ENCODE measurements at regions of chr17 and their contacts with region 1.

Region 1: GRCh38 chr17:40909351-40909750 is 24.3 kb upstream of the KRT20 start:
- DNase-seq: no peak
- H3K4me3 ChIP-seq: no peak overlapping the region
- H3K27ac ChIP-seq: peak overlapping the region; percentile 55 to 75 (median 62)
- H3K4me1 ChIP-seq: peaks cover 0 to 25% (median 21%) of the 10 kb centered on the region in 4 donors
- H3K27me3 ChIP-seq: peaks cover 0 to 12% (median 0%) of the 10 kb centered on the region in 4 donors
- CTCF ChIP-seq: peak; percentile 76 to 84 (median 81)
- EP300 ChIP-seq: no peak
- POLR2A ChIP-seq: no peak

Region 2: DNA sequence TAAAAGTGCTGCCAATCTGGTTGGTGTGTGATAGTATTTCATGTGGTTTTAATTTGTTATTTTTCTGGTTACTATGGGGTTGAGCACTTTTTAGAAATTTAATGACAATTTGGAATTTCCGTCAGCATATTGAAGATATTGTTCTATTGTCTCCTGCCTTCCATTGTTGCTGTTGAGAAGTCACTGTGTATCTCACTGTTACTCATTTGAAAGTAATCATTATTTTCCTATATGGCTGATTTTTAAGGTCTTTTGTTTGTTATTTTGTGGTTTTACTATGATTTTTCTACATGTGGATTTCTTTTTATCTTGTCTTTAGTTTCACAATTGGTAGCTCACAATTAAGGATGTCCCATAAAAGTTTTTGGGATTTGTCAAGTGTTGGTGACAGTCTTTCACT is 145.6 kb before region 1 on chr17:
- intact Hi-C with region 1: no loop called
- DNase-seq: no peak
- H3K4me3 ChIP-seq: no peak overlapping the region
- H3K27ac ChIP-seq: no peak overlapping the region
- H3K4me1 ChIP-seq: no peaks in the 10 kb centered on the region
- H3K27me3 ChIP-seq: peaks cover 0 to 8% (median 0%) of the 10 kb centered on the region in 4 donors
- CTCF ChIP-seq: no peak
- EP300 ChIP-seq: no peak
- POLR2A ChIP-seq: no peak

Region 3: GRCh38 chr17:40803617-40804082 is 105.7 kb before region 1 on chr17:
- intact Hi-C with region 1: loop called (anchors 10 kb)
- DNase-seq: no peak
- H3K4me3 ChIP-seq: no peak overlapping the region
- H3K27ac ChIP-seq: no peak overlapping the region
- H3K4me1 ChIP-seq: no peaks in the 10 kb centered on the region
- H3K27me3 ChIP-seq: peaks cover 0 to 54% (median 0%) of the 10 kb centered on the region in 4 donors
- CTCF ChIP-seq: peak; percentile 84 to 85 (median 84)
- EP300 ChIP-seq: no peak
- POLR2A ChIP-seq: no peak

Region 4: GRCh38 chr17:40993839-40994238 is 84.5 kb after region 1 on chr17 and contains the start of gene KRTAP3-3:
- intact Hi-C with region 1: no loop called
- DNase-seq: no peak
- H3K4me3 ChIP-seq: no peak within 1 kb of the TSS
- H3K27ac ChIP-seq: no peak within 1 kb of the TSS
- H3K4me1 ChIP-seq: no peaks in the 10 kb centered on the region
- H3K27me3 ChIP-seq: peaks cover 0 to 5% (median 2%) of the 10 kb centered on the region in 4 donors
- CTCF ChIP-seq: no peak
- EP300 ChIP-seq: no peak
- POLR2A ChIP-seq: no peak
- total RNA-seq, gene KRTAP3-3: not detected

Region 5: GRCh38 chr17:41322094-41322902 is 412.9 kb after region 1 on chr17:
- intact Hi-C with region 1: loop called (anchors 5 kb)
- DNase-seq: no peak
- H3K4me3 ChIP-seq: no peak overlapping the region
- H3K27ac ChIP-seq: no peak overlapping the region
- H3K4me1 ChIP-seq: no peaks in the 10 kb centered on the region
- H3K27me3 ChIP-seq: no peaks in the 10 kb centered on the region
- CTCF ChIP-seq: peak; percentile 64 to 82 (median 68)
- EP300 ChIP-seq: no peak
- POLR2A ChIP-seq: no peak

Region 6: DNA sequence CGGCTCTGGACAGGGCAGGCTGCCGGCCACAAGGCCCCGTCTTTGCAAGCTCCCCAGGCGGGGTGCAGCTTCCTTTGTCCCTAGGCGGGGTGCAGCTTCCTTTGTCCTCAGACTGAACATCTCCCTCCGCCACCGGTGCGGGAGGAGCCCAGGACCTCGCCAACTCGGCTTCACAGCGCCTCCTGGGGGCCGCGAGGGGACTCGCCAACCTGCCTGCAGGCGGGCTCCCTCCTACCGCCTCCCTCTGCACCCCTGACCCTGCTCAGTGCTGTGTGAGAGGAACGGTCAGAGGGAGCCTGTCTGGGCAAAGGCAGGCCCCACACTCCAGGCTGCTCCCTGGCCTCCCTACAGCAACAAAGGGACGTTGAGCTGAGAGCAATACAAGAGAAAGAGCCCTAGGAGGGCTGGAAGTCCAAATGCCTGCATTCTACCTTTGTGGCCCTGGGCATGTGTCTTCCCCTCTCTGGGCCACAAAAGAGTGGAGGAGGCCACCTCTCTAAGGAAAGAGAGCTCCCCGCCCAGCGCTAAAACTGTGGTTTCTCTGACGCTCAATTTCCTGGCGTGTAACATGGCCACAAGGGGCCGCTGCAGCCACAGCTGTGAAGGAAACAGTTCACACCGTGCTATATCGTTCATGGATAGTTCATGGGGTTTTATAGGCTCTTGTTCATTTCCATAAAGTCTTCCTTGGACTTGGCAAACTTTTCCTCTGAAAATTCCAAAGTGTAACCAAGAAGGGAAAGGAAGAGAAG is 639.7 kb after region 1 on chr17:
- intact Hi-C with region 1: loop called (anchors 2 kb)
- DNase-seq: peak; percentile 93
- H3K4me3 ChIP-seq: peak overlapping the region; percentile 26 to 44 (median 36)
- H3K27ac ChIP-seq: peak overlapping the region in 2 of 4 donors; percentile 17 to 46
- H3K4me1 ChIP-seq: peaks cover 17 to 26% (median 20%) of the 10 kb centered on the region in 4 donors
- H3K27me3 ChIP-seq: no peaks in the 10 kb centered on the region
- CTCF ChIP-seq: peak; percentile 69 to 81 (median 73)
- EP300 ChIP-seq: no peak
- POLR2A ChIP-seq: no peak